ENCODE measurements at regions of chr11 and their contacts with region 1.

Region 1: DNA sequence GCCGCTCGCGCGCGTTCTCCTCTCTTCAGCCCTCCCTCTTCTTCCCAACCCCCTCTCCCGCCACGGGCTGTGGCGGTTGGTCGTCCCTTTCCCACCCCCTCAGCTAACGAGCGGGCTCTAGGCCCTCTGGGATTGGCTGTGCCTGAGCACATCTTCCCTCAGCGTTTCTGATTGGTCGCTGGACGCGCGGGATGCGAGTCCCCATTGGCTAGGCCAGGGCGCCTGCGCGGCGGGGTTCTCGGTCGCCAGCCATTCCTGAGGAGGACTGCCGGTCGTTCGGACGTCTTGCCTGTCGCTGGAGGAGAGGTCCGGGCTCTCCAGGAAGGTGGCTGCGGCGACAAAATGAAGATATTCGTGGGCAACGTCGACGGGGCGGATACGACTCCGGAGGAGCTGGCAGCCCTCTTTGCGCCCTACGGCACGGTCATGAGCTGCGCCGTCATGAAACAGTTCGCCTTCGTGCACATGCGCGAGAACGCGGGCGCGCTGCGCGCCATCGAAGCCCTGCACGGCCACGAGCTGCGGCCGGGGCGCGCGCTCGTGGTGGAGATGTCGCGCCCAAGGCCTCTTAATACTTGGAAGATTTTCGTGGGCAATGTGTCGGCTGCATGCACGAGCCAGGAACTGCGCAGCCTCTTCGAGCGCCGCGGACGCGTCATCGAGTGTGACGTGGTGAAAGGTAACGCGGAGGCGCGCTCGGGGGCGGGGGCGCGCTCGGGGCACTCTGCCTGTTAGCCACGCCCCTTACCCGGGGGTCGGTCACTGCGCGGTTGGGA is at the start of gene RBM14:
- DNase-seq: peak; percentile 99
- H3K27ac ChIP-seq: peak within 1 kb of the TSS; percentile 95
- CTCF ChIP-seq: no peak

Region 2: GRCh38 chr11:66592457-66593302 is 23.9 kb before region 1 on chr11 and contains the starts of genes CCDC87 and CCS:
- CTCF ChIA-PET with region 1: interaction called, 10 read pairs
- POLR2A ChIA-PET with region 1: interaction called, 4 read pairs
- DNase-seq: peak; percentile 100
- H3K27ac ChIP-seq: peak within 1 kb of the TSS; percentile 73
- CTCF ChIP-seq: peak; percentile 76

Region 3: DNA sequence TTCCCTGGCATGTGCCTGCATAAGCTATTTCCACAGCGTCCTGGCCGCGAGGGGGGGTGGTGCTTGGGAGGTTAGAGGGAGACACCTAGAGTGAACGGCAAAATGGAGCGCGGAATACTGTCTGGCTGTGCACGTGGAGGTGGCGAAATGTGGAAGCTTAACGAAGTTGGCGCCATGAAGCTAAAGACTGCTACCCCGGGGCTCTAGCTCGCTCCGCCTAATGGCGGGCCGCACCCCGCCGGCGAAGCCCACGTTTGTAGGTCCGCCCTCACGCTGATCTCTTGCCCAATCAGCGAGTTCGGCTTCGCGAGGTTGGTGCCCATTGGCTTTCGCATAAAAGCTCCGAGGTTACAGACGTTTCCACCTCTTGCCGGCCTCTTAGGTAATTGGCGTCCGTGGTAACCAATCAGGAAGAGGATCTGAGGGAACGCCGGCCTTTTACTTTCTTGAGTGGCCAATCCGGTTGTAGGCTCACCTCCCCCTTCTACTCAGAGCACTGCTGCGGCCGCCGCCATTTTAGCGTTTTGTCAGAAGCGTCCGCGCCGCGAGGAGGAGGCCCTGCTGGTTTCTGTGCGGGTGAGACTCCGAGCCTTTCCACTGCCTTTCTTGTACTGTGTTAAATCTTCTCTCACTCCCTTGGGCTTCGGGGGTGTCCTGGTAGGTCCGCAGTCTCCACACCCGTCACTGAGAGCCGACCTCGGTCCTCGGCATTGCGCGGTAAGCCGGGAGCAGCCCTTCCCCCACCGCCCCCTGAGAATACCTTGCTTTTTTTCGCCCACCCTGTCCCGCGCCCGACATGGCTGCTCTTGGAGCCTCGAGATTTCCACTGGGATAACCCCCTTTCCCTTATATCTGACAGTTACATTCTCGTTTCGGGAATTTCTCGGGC is 21.9 kb after region 1 on chr11 and contains the start of gene RBM4:
- CTCF ChIA-PET with region 1: no interaction called
- POLR2A ChIA-PET with region 1: interaction called, 16 read pairs
- DNase-seq: peak; percentile 100
- H3K27ac ChIP-seq: peak within 1 kb of the TSS; percentile 88
- CTCF ChIP-seq: no peak

Region 4: GRCh38 chr11:66677599-66678375 is 61.2 kb after region 1 on chr11 and contains the start of gene RBM4B:
- CTCF ChIA-PET with region 1: no interaction called
- POLR2A ChIA-PET with region 1: interaction called, 10 read pairs
- DNase-seq: peak; percentile 95
- H3K27ac ChIP-seq: peak within 1 kb of the TSS; percentile 94
- CTCF ChIP-seq: no peak

Measured in RWPE1 (cell line).